IMR-90 (cell line): ENCODE measurements at regions of chr16 and their contacts with region 1.

Region 1: GRCh38 chr16:67183627-67184328 is at the start of gene MATCAP1:
- DNase-seq: peak; percentile 97
- ATAC-seq: peak; percentile 91
- H3K4me3 ChIP-seq: peak within 1 kb of the TSS; percentile 62
- H3K27ac ChIP-seq: peak within 1 kb of the TSS; percentile 87
- H3K4me1 ChIP-seq: peaks cover 11% of the 10 kb centered on the region
- H3K27me3 ChIP-seq: no peaks in the 10 kb centered on the region
- CTCF ChIP-seq: no peak
- POLR2A ChIP-seq: peak; percentile 90
- RAD21 ChIP-seq: no peak; the same call in 1 of the 2 replicates
- total RNA-seq, gene MATCAP1: 7.5 and 8.2 TPM in 2 replicates

Region 2: DNA sequence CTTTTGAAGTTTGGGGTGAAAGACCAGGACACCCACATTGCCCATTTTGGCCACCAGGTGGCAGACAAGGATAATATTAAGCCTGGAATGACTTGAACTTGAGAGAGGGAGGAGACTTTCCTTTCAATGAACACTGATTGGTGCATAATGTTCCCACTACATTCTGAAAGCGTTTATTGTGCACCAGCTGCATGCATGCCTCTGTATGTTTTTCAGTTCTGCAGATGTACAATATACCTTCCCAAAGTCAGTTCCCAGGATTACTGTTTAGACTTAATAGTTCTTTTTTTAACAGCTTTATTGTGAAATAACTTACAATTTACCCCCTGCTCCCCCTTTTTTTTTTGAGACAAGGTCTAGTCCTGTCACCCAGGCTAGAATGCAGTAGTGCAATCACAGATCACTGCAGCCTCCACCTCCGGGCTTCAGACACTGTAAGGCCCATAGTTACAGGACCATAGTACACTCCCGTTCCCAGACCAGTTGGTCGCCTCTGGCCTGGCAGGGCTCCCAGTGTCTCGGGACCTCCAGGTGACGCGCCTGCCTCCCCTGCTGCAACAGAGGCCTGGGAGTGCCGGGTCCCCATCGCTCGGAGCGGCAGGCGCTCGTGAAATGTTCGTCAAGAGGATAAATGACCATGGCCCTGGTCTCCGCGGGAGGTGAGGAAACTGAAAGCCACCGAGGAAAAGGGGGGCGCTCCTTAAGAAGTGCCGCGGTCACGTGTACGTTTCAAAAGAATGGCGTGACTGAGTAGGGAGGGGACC is 236.3 kb before region 1 on chr16:
- CTCF ChIA-PET with region 1: no interaction called
- POLR2A ChIA-PET with region 1: no interaction called
- dilution Hi-C with region 1: no loop called
- in situ Hi-C with region 1: no loop called
- intact Hi-C with region 1: loop called (anchors 1 kb)
- DNase-seq: peak; percentile 82
- ATAC-seq: peak; percentile 88
- H3K4me3 ChIP-seq: peak overlapping the region; percentile 56
- H3K27ac ChIP-seq: no peak overlapping the region
- H3K4me1 ChIP-seq: peaks cover 6% of the 10 kb centered on the region
- H3K27me3 ChIP-seq: peaks cover 16% of the 10 kb centered on the region; the same call in 1 of the 2 replicates
- CTCF ChIP-seq: peak; percentile 82
- POLR2A ChIP-seq: no peak
- RAD21 ChIP-seq: peak; percentile 73

Region 3: DNA sequence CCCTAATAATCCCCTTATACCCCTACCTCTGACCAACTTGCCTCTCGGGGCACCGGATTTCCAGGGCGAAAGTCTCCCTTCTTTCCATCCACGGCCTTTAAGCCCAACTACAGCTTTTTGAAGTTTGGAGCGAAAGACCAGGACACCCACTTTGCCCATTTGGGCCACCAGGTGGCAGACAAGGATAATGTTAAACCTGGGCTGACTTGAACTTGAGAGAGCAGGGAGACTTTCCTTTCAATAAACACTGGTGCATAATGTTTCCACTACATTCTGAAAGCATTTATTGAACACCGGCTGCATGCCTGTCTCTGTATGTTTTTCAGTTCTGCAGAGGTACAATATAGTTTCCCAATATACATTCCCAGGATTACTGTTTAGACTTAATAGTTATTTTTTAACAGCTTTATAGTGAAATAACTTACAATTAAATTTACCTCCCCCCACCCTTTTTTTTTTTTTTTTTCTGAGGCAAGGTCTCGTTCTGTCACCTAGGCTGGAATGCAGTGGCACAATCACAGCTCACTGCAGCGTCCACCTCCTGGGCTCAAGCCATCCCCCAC is 229.6 kb before region 1 on chr16:
- CTCF ChIA-PET with region 1: interaction called, 3 read pairs
- POLR2A ChIA-PET with region 1: no interaction called
- dilution Hi-C with region 1: no loop called
- in situ Hi-C with region 1: no loop called
- intact Hi-C with region 1: loop called (anchors 1 kb)
- DNase-seq: peak; percentile 73
- ATAC-seq: peak; percentile 93
- H3K4me3 ChIP-seq: no peak overlapping the region
- H3K27ac ChIP-seq: no peak overlapping the region
- H3K4me1 ChIP-seq: no peaks in the 10 kb centered on the region; the same call in 1 of the 2 replicates
- H3K27me3 ChIP-seq: peaks cover 12% of the 10 kb centered on the region
- CTCF ChIP-seq: peak; percentile 84
- POLR2A ChIP-seq: no peak
- RAD21 ChIP-seq: peak; percentile 86

Region 4: DNA sequence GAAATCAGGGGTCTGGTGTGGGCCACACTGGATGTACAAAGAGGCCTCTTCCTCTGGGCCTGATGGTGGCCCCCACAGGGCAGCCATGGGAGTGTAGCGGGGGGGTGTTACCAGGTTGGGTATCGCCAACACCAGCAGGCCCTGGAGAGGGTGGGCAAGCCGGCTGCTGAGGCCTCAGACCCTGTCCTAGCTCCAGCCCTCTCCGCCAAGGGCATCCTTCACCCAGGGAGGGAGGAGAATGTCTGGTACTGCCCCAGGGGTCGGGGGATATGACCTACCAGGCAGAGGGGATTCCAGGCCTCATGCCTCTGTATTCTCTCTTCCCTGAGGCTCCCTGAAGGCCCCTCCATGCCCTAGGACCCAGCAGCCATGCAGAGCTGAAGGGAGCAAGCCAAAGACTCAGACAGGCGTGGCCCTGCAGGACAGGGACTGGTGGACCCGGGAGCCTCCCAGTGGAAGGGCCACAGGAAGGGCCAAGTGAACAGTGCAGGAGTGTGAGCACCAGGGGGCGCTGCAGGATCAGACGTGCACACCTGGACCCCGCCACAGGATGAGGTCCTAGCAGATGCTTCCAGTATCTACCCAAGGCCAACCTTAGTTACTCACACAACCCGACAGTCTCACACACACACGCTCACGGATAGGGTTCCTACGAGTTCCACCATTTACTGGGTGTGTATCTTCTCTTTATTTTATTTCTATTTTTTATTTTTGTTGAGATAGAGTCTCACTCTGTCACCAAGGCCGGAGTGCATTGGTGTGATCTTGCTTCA is 206.3 kb before region 1 on chr16:
- CTCF ChIA-PET with region 1: interaction called, 6 read pairs
- POLR2A ChIA-PET with region 1: no interaction called
- dilution Hi-C with region 1: no loop called
- in situ Hi-C with region 1: no loop called
- intact Hi-C with region 1: loop called (anchors 1 kb)
- DNase-seq: peak; percentile 79
- ATAC-seq: peak; percentile 97
- H3K4me3 ChIP-seq: no peak overlapping the region
- H3K27ac ChIP-seq: no peak overlapping the region
- H3K4me1 ChIP-seq: no peaks in the 10 kb centered on the region; the same call in 1 of the 2 replicates
- H3K27me3 ChIP-seq: no peaks in the 10 kb centered on the region; the same call in 1 of the 2 replicates
- CTCF ChIP-seq: peak; percentile 97
- POLR2A ChIP-seq: peak; percentile 60; the same call in 1 of the 2 replicates
- RAD21 ChIP-seq: peak; percentile 100

Region 5: DNA sequence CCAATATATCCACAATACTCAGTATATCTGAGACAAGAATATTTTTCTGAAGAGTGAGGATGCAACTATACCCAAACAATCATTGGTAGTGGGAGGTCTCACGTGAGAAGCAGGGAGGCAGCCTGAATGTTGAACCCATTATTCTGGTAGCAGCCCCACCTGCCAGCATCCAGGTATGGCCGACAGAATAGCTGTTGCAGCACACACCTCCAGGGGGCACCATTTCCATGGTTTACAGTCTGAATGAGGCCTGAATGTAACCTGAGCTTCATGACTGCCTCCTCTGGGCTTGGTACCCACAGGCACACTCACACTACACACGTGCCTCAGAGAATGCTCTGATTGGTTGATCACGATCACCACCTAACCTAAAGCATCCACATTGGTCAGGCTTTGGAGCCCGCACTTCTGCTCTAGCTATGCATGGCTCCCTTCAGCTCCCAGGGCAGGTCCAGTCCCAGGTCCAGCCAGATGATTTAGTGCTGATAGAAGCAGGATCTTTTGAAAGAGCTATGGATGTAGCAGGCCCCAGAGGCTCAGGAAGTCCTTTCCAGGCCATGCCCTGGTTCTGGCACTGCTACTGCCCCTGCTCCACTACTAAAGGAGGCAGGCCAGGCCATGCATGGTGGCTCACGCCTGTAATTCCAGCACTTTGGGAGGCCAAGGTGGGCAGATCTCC is 165.8 kb before region 1 on chr16:
- CTCF ChIA-PET with region 1: interaction called, 4 read pairs
- POLR2A ChIA-PET with region 1: no interaction called
- dilution Hi-C with region 1: no loop called
- in situ Hi-C with region 1: no loop called
- intact Hi-C with region 1: loop called (anchors 10 kb)
- DNase-seq: peak; percentile 95
- ATAC-seq: peak; percentile 75
- H3K4me3 ChIP-seq: no peak overlapping the region
- H3K27ac ChIP-seq: no peak overlapping the region
- H3K4me1 ChIP-seq: peaks cover 9% of the 10 kb centered on the region
- H3K27me3 ChIP-seq: peaks cover 2% of the 10 kb centered on the region; the same call in 1 of the 2 replicates
- CTCF ChIP-seq: peak; percentile 89
- POLR2A ChIP-seq: no peak
- RAD21 ChIP-seq: peak; percentile 91

Region 6: DNA sequence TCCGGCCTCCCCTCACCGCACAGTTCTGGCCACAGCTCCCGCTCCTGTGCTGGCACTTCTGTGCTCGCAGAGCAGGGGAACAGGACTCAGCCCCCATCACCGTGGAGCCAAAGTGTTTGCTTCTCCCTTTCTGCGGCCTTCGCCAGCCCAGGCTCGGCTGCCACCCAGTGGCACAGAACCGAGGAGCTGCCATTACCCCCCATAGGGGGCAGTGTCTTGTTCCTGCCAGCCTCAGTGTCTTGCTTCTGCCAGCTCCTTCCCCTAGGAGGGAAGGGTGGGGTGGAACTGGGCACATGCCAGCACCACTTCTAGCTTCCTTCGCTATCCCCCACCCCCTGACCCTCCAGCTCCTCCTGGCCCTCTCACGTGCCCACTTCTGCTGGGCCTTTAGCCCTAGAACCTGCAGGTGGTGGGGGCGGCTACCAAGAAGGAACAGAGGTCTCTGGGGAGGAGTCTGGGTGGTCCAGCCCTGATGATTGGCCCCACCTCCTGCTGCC is 14.5 kb after region 1 on chr16:
- CTCF ChIA-PET with region 1: no interaction called
- POLR2A ChIA-PET with region 1: no interaction called
- dilution Hi-C with region 1: no loop called
- in situ Hi-C with region 1: no loop called
- intact Hi-C with region 1: no loop called
- DNase-seq: peak; percentile 29
- ATAC-seq: peak; percentile 64
- H3K4me3 ChIP-seq: no peak overlapping the region
- H3K27ac ChIP-seq: no peak overlapping the region
- H3K4me1 ChIP-seq: peaks cover 2% of the 10 kb centered on the region; the same call in 1 of the 2 replicates
- H3K27me3 ChIP-seq: no peaks in the 10 kb centered on the region
- CTCF ChIP-seq: peak; percentile 77
- POLR2A ChIP-seq: no peak
- RAD21 ChIP-seq: peak; percentile 50

Region 7: GRCh38 chr16:67226804-67227557 is 43.2 kb after region 1 on chr16 and contains the start of gene TMEM208:
- CTCF ChIA-PET with region 1: no interaction called
- POLR2A ChIA-PET with region 1: no interaction called
- dilution Hi-C with region 1: no loop called
- in situ Hi-C with region 1: no loop called
- intact Hi-C with region 1: no loop called
- DNase-seq: peak; percentile 98
- ATAC-seq: peak; percentile 99
- H3K4me3 ChIP-seq: peak within 1 kb of the TSS; percentile 80
- H3K27ac ChIP-seq: peak within 1 kb of the TSS; percentile 89
- H3K4me1 ChIP-seq: peaks cover 12% of the 10 kb centered on the region
- H3K27me3 ChIP-seq: no peaks in the 10 kb centered on the region
- CTCF ChIP-seq: peak; percentile 29
- POLR2A ChIP-seq: peak; percentile 82
- RAD21 ChIP-seq: peak; percentile 8; the same call in 1 of the 2 replicates
- total RNA-seq, gene TMEM208: 41.7 and 65.6 TPM in 2 replicates

Region 8: DNA sequence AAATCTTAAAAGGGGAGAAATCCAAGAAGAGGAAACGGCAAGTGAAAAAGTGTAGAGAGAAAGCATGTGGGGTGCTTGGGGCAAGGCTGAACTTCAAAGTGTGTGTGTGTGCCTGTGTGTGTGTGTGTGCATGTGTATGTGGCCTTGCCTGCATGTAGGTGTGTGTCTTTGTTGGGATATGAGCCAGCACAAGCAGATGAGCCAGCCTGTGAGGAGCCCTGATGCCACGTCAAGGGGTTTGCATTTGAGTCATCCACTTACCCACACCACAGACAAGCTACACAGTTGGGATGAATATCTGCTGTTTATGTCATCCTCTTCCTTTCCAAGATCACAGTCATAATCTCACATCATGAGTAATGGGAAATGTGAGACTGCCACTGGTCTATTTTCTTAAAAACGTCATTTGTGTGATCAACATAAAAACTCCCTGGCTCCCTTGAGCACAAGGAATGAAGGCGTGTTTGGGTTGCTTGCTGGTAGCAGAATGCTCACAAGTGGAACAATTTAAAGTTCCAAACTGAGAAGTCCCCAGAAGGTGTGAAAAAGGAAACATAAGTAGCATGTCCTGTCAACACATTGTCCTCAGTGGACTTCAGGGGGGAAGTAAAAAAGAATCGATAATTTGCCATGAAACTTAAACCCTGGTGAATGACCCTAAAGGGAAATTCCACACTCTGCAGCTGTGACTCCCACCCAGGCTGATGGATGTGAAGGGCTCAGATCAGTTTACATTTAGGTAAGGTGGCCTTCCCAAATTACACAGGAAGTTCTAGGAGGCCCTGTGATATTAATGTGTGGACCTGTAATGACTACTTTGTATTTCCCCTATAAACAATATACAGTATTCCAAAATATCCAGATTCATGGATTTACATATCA is 128.1 kb after region 1 on chr16:
- CTCF ChIA-PET with region 1: no interaction called
- POLR2A ChIA-PET with region 1: no interaction called
- dilution Hi-C with region 1: no loop called
- in situ Hi-C with region 1: no loop called
- intact Hi-C with region 1: no loop called
- DNase-seq: peak; percentile 100
- ATAC-seq: peak; percentile 94
- H3K4me3 ChIP-seq: no peak overlapping the region
- H3K27ac ChIP-seq: peak overlapping the region; percentile 82
- H3K4me1 ChIP-seq: peaks cover 15% of the 10 kb centered on the region
- H3K27me3 ChIP-seq: no peaks in the 10 kb centered on the region
- CTCF ChIP-seq: no peak
- POLR2A ChIP-seq: peak; percentile 92
- RAD21 ChIP-seq: 0 out of 2 replicates have a peak, but pooled peaks have one; percentile 13